ENCODE measurements at regions of chr11 and their contacts with region 1.

Region 1: GRCh38 chr11:114180301-114181055 is 115.7 kb upstream of the NNMT start:
- DNase-seq: no peak
- H3K4me3 ChIP-seq: peak overlapping the region; percentile 44 to 53
- H3K27ac ChIP-seq: peak overlapping the region; percentile 84 to 98
- H3K4me1 ChIP-seq: peaks cover 0 to 96% (median 85%) of the 10 kb centered on the region in 4 donors
- H3K27me3 ChIP-seq: no peaks in the 10 kb centered on the region
- CTCF ChIP-seq: peak; percentile 35 to 37

Region 2: GRCh38 chr11:114159802-114160632 is 20.5 kb before region 1 on chr11:
- intact Hi-C with region 1: loop called (anchors 2 kb)
- DNase-seq: peak; percentile 100
- H3K4me3 ChIP-seq: peak overlapping the region; percentile 34
- H3K27ac ChIP-seq: peak overlapping the region; percentile 94 to 95
- H3K4me1 ChIP-seq: peaks cover 26 to 98% (median 94%) of the 10 kb centered on the region in 4 donors
- H3K27me3 ChIP-seq: no peaks in the 10 kb centered on the region
- CTCF ChIP-seq: peak in 1 of 2 experiments; percentile 4

Region 3: DNA sequence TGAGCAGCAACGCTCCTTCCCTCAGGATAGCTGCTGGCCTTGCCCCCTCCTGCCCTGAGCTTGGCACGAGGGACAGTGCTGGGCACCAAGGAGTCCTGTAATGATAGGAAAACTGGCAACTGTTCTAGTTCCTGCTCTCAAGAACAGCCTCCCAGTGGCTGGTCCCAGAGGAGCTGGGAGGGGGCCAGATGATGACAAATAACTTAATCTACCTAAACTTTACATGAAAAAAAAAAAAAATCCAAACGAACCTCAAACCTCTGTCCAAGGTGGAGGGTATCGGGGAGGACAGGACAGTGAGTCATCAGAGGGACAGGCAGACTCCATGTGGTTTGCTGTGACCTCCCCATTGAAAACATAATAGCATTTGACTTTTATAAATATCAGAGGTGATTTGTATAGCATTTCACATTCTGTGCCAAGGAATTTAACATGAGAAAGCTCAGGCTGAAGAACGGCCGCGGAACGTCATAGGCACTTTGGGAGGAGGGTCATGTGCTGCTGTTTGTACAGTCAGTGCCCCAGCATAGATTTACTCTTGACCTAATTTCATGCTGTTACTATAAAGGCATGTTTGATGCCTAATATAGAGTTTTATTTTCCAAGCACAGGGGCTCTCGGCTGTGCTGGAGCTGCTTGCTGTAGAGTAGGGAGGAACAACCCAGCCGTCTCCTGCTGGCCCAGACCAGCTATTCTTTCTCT is 17.5 kb after region 1 on chr11:
- intact Hi-C with region 1: loop called (anchors 2 kb)
- DNase-seq: peak; percentile 76 to 90
- H3K4me3 ChIP-seq: peak overlapping the region in 1 of 2 donors; percentile 19
- H3K27ac ChIP-seq: peak overlapping the region; percentile 83 to 84
- H3K4me1 ChIP-seq: peaks cover 9 to 100% (median 88%) of the 10 kb centered on the region in 4 donors
- H3K27me3 ChIP-seq: no peaks in the 10 kb centered on the region
- CTCF ChIP-seq: no peak